Heart left ventricle (tissue), 16 donors: ENCODE measurements at regions of chr20 and their contacts with region 1.

Region 1: GRCh38 chr20:62010551-62011402 is 54.9 kb downstream of the TAF4 start:
- DNase-seq: peak; percentile 47 to 66 (median 59)
- ATAC-seq: peak in 3 of 4 donors; percentile 47 to 78 (median 71)
- H3K4me3 ChIP-seq: no peak overlapping the region
- H3K27ac ChIP-seq: no peak overlapping the region
- H3K4me1 ChIP-seq: peaks cover 0 to 6% (median 0%) of the 10 kb centered on the region in 12 donors
- H3K27me3 ChIP-seq: no peaks in the 10 kb centered on the region
- CTCF ChIP-seq: peak; percentile 45 to 77 (median 68)
- POLR2A ChIP-seq: no peak

Region 2: GRCh38 chr20:62065669-62066338 is 55.0 kb after region 1 on chr20 and contains the start of gene TAF4:
- intact Hi-C with region 1: loop called in 1 of 10 experiments (anchors 5 kb)
- DNase-seq: peak; percentile 73 to 89 (median 81)
- ATAC-seq: peak; percentile 54 to 65 (median 58)
- H3K4me3 ChIP-seq: peak within 1 kb of the TSS; percentile 60 to 87 (median 70)
- H3K27ac ChIP-seq: peak within 1 kb of the TSS; percentile 74 to 94 (median 89)
- H3K4me1 ChIP-seq: peaks cover 2 to 41% (median 30%) of the 10 kb centered on the region in 12 donors
- H3K27me3 ChIP-seq: no peaks in the 10 kb centered on the region
- CTCF ChIP-seq: no peak
- POLR2A ChIP-seq: peak in 1 of 2 donors; percentile 85
- total RNA-seq, gene TAF4: 7.8 to 37.7 (median 11.4) TPM

Region 3: GRCh38 chr20:62136283-62137091 is 125.7 kb after region 1 on chr20:
- intact Hi-C with region 1: loop called in 8 of 10 experiments (anchors 2 to 5 kb)
- DNase-seq: peak in 3 of 5 donors; percentile 57 to 71 (median 61)
- ATAC-seq: peak in 3 of 4 donors; percentile 20 to 45 (median 37)
- H3K4me3 ChIP-seq: no peak overlapping the region
- H3K27ac ChIP-seq: no peak overlapping the region
- H3K4me1 ChIP-seq: peaks cover 7 to 59% (median 44%) of the 10 kb centered on the region in 12 donors
- H3K27me3 ChIP-seq: no peaks in the 10 kb centered on the region
- CTCF ChIP-seq: peak; percentile 64 to 90 (median 78)
- POLR2A ChIP-seq: no peak

Region 4: GRCh38 chr20:62156592-62157386 is 146.0 kb after region 1 on chr20:
- intact Hi-C with region 1: loop called in 4 of 10 experiments (anchors 1 to 5 kb)
- DNase-seq: peak; percentile 59 to 79 (median 72)
- ATAC-seq: peak; percentile 63 to 88 (median 84)
- H3K4me3 ChIP-seq: no peak overlapping the region
- H3K27ac ChIP-seq: no peak overlapping the region
- H3K4me1 ChIP-seq: peaks cover 0 to 16% (median 9%) of the 10 kb centered on the region in 12 donors
- H3K27me3 ChIP-seq: no peaks in the 10 kb centered on the region
- CTCF ChIP-seq: peak; percentile 63 to 81 (median 69)
- POLR2A ChIP-seq: no peak

Region 5: DNA sequence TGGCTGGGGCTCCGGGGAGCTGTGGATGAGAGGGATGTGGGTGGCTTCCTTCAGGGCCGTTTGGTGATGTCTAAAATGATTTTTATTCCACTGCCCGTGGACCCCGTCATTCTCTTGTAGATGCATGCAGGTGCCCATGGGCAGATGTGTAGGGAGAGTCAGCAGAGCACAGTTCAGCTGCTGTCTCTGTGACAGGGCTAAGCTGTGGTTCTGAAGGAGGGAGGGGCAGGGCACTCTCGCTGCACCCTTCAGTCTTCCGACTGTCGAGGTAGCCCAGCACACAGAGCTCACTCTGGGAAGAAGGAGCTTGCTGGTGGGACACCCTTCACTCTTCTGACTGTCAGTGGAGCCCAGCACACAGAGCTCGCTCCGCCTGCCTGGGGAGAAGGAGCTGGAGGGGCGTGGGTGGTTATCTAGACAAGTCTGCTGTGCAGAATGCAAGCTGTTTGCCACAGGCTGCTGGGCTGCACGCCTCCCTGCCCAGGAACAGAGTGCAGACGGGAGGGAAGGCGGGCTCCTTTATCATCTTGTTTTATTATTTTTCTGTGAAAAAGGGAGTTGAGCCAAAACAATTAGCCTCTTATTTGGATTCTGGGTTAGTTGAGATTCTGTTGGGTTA is 263.7 kb after region 1 on chr20:
- intact Hi-C with region 1: loop called in 1 of 10 experiments (anchors 10 kb)
- DNase-seq: no peak
- ATAC-seq: peak in 3 of 4 donors; percentile 36 to 53 (median 41)
- H3K4me3 ChIP-seq: no peak overlapping the region
- H3K27ac ChIP-seq: no peak overlapping the region
- H3K4me1 ChIP-seq: peaks cover 0 to 25% (median 11%) of the 10 kb centered on the region in 12 donors
- H3K27me3 ChIP-seq: no peaks in the 10 kb centered on the region
- CTCF ChIP-seq: no peak
- POLR2A ChIP-seq: no peak